ENCODE measurements at regions of chr7 and their contacts with region 1.

Region 1: GRCh38 chr7:73851410-73852234 is 9.3 kb upstream of the METTL27 start:
- DNase-seq: peak; percentile 95
- H3K4me3 ChIP-seq: no peak overlapping the region
- H3K27me3 ChIP-seq: no peaks in the 10 kb centered on the region
- CTCF ChIP-seq: no peak

Region 2: DNA sequence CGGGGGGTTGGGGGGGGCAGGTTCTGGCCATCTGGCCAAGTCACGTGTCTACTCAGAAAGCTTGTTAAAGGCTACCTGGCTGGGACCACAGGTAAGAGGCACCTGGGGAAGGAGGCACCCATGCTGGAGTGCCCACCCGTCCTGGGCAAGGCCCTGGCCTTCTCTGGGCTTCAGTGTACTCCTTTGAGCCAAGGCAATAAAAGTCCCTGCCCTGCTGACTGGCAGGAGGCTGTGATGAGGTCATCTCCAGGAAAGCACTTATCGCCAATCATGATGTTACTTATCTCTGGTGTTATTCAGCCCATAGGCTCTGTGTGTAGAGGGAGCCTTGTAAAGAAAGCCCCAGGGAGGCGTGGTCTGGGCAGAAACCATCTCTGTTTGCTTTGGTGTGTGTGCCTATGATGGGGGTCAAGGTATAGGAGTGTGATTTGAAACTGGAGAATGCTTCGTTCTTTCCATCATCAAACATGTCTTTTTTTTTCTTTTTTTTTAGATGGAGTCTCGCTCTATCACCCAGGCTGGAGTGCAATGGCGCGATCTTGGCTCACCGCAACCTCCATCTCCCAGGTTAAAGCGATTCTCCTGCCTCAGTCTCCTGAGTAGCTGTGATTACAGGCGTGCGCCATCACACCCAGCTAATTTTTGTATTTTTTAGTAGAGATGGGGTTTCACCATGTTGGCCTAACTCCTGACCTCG is 23.4 kb before region 1 on chr7:
- CTCF ChIA-PET with region 1: interaction called, 20 read pairs
- POLR2A ChIA-PET with region 1: no interaction called
- DNase-seq: no peak
- H3K4me3 ChIP-seq: no peak overlapping the region
- H3K27me3 ChIP-seq: no peaks in the 10 kb centered on the region
- CTCF ChIP-seq: no peak